Heart right ventricle (tissue), 16 donors: ENCODE measurements at regions of chr15 and their contacts with region 1.

Region 1: GRCh38 chr15:80776420-80777045 is 2.6 kb upstream of the CEMIP start:
- DNase-seq: peak; percentile 27 to 77
- ATAC-seq: peak; percentile 37 to 63 (median 54)
- H3K4me3 ChIP-seq: no peak overlapping the region
- H3K27ac ChIP-seq: peak overlapping the region in 4 of 10 donors; percentile 17 to 61 (median 28)
- H3K4me1 ChIP-seq: peaks cover 14 to 53% (median 38%) of the 10 kb centered on the region in 9 donors
- H3K27me3 ChIP-seq: peaks cover 0 to 44% (median 37%) of the 10 kb centered on the region in 7 donors
- CTCF ChIP-seq: peak; percentile 79 to 90 (median 87)

Region 2: GRCh38 chr15:80567721-80568157 is 208.8 kb before region 1 on chr15:
- intact Hi-C with region 1: loop called in 9 of 10 experiments (anchors 1 to 5 kb)
- DNase-seq: peak in 1 of 2 donors; percentile 64
- ATAC-seq: peak; percentile 63 to 88 (median 83)
- H3K4me3 ChIP-seq: no peak overlapping the region
- H3K27ac ChIP-seq: no peak overlapping the region
- H3K4me1 ChIP-seq: peaks cover 0 to 8% (median 0%) of the 10 kb centered on the region in 9 donors
- H3K27me3 ChIP-seq: peaks cover 0 to 9% (median 0%) of the 10 kb centered on the region in 7 donors
- CTCF ChIP-seq: peak; percentile 41 to 80 (median 71)

Region 3: DNA sequence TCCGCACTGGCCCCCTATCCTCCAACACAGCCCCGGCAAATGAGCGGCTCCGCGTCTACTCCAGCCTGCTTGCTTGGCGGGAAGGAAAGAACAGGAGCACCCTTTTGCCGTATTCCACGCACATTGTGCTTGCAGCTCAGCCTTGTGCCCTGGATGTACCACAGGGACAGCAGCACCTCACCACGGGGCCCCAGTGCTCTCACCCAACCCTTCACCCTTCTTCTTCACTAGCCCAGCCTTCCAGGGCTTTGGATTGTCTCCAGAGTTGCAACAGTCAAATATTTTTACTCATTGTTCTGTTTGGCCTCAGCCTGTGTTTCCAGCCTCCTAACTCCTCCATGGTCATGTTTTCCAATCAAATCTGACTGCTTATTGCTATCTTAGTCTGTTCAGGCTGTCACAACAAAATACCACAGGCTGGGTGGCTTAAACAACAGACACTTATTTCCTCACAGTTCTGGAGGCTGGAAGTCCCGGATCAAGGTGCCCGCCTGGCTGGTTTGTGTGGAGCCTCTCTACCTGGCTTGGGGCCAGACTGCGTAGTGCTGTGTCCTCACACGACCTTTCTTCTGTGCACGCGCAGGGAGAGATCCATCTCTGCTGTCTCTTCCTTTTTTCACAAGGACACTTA is 160.7 kb before region 1 on chr15:
- intact Hi-C with region 1: loop called in 6 of 10 experiments (anchors 1 to 5 kb)
- DNase-seq: peak; percentile 44 to 58
- ATAC-seq: peak in 7 of 8 donors; percentile 37 to 81 (median 71)
- H3K4me3 ChIP-seq: no peak overlapping the region
- H3K27ac ChIP-seq: peak overlapping the region in 1 of 10 donors; percentile 21
- H3K4me1 ChIP-seq: peaks cover 2 to 18% (median 10%) of the 10 kb centered on the region in 9 donors
- H3K27me3 ChIP-seq: no peaks in the 10 kb centered on the region
- CTCF ChIP-seq: no peak

Region 4: DNA sequence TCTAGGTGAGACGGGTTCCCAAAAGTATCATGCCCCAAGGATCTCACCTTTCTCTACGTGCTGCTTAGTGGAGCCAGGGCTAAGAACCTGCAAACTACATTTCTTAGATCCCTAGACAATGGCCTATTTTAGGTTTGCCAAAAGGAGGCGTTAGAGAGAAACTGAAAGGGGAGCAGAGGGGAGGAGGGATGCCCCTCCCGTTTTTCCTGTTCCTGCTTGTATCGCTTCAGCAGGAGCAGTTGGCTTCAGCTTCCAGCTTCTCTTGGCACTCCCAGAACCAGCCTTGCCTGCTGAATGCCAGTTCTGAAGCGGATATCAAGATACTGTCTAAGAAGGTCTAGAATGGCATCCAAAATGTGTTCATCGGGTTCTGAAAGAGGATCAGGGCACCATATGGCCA is 139.9 kb before region 1 on chr15:
- intact Hi-C with region 1: loop called in 1 of 10 experiments (anchors 5 kb)
- DNase-seq: peak in 1 of 2 donors; percentile 18
- ATAC-seq: peak in 5 of 8 donors; percentile 65 to 78 (median 73)
- H3K4me3 ChIP-seq: no peak overlapping the region
- H3K27ac ChIP-seq: no peak overlapping the region
- H3K4me1 ChIP-seq: peaks cover 0 to 10% (median 0%) of the 10 kb centered on the region in 9 donors
- H3K27me3 ChIP-seq: no peaks in the 10 kb centered on the region
- CTCF ChIP-seq: peak in 3 of 9 donors; percentile 8 to 25 (median 15)

Region 5: GRCh38 chr15:80695104-80695910 is 81.2 kb before region 1 on chr15 and contains the start of gene ABHD17C:
- intact Hi-C with region 1: loop called in 1 of 10 experiments (anchors 2 kb)
- DNase-seq: peak; percentile 39 to 75
- ATAC-seq: peak; percentile 63 to 90 (median 85)
- H3K4me3 ChIP-seq: peak within 1 kb of the TSS; percentile 63 to 93 (median 78)
- H3K27ac ChIP-seq: peak within 1 kb of the TSS; percentile 57 to 91 (median 84)
- H3K4me1 ChIP-seq: peaks cover 0 to 28% (median 20%) of the 10 kb centered on the region in 9 donors
- H3K27me3 ChIP-seq: no peaks in the 10 kb centered on the region
- CTCF ChIP-seq: no peak
- total RNA-seq, gene ABHD17C: 3.4 to 8.5 (median 4.6) TPM

Region 6: GRCh38 chr15:80970018-80970658 is 193.6 kb after region 1 on chr15:
- intact Hi-C with region 1: loop called in 9 of 10 experiments (anchors 2 to 5 kb)
- DNase-seq: peak; percentile 33 to 69
- ATAC-seq: peak in 7 of 8 donors; percentile 46 to 83 (median 74)
- H3K4me3 ChIP-seq: no peak overlapping the region
- H3K27ac ChIP-seq: no peak overlapping the region
- H3K4me1 ChIP-seq: peaks cover 0 to 15% (median 0%) of the 10 kb centered on the region in 9 donors
- H3K27me3 ChIP-seq: no peaks in the 10 kb centered on the region
- CTCF ChIP-seq: peak; percentile 76 to 97 (median 91)